Spleen (tissue), 13 donors: ENCODE measurements at regions of chr17 and their contacts with region 1.

Region 1: GRCh38 chr17:47850692-47851573 is at the start of gene SP6:
- DNase-seq: peak; percentile 85
- H3K4me3 ChIP-seq: peak within 1 kb of the TSS; percentile 12 to 67 (median 28)
- H3K27ac ChIP-seq: peak within 1 kb of the TSS in 6 of 8 donors; percentile 5 to 74 (median 50)
- H3K4me1 ChIP-seq: peaks cover 14 to 54% (median 39%) of the 10 kb centered on the region in 6 donors
- H3K27me3 ChIP-seq: peaks cover 4 to 100% (median 79%) of the 10 kb centered on the region in 7 donors
- CTCF ChIP-seq: peak in 2 of 11 experiments; percentile 22 to 30
- POLR2A ChIP-seq: no peak
- total RNA-seq, gene SP6: 0.19 to 3.0 (median 2.0) TPM

Region 2: GRCh38 chr17:48724251-48725003 is 873.5 kb after region 1 on chr17:
- intact Hi-C with region 1: loop called (anchors 10 kb)
- DNase-seq: peak; percentile 89
- H3K4me3 ChIP-seq: peak overlapping the region in 1 of 8 donors; percentile 48
- H3K27ac ChIP-seq: no peak overlapping the region
- H3K4me1 ChIP-seq: peaks cover 14 to 67% (median 51%) of the 10 kb centered on the region in 6 donors
- H3K27me3 ChIP-seq: peaks cover 29 to 100% (median 100%) of the 10 kb centered on the region in 7 donors
- CTCF ChIP-seq: peak in 10 of 11 experiments; percentile 50 to 82 (median 68)
- POLR2A ChIP-seq: no peak